GM12878 (cell line): ENCODE measurements at regions of chr6 and their contacts with region 1.

Region 1: GRCh38 chr6:89432875-89433251 is at the start of gene ANKRD6:
- DNase-seq: peak; percentile 17
- ATAC-seq: peak; percentile 97
- H3K4me3 ChIP-seq: peak within 1 kb of the TSS; percentile 79
- H3K27ac ChIP-seq: no peak within 1 kb of the TSS
- H3K4me1 ChIP-seq: peaks cover 8% of the 10 kb centered on the region
- H3K27me3 ChIP-seq: peaks cover 0 to 4% of the 10 kb centered on the region in 2 experiments; a peak in 3 of 4 replicates
- CTCF ChIP-seq: peak; percentile 81 to 92 (median 84); a peak in 5 of 6 replicates
- EP300 ChIP-seq: no peak
- POLR2A ChIP-seq: no peak
- RAD21 ChIP-seq: peak; percentile 93
- polyA plus RNA-seq, gene ANKRD6: 0.03 to 0.09 TPM

Region 2: DNA sequence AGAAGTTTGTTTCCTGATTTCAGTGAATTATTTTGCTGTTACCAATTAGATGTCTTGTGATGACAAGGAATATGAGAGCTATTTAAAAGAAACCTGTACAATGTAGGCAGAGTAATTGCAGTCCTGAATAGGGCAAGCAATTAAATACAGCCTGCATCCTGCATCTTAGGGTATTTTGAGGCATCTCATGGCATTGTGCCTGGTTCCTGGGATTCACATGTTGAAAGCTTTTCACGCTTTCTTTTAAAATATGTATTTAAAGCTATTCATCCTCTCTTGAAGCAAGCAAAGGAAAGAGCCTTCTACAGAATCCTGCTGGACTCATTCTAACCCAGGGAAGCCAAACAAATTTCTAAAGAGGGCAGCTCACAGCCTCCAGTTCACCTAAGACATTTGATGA is 16.1 kb before region 1 on chr6:
- CTCF ChIA-PET with region 1: interaction called, 14 read pairs
- POLR2A ChIA-PET with region 1: no interaction called
- RAD21 ChIA-PET with region 1: no interaction called
- SMC1A ChIA-PET with region 1: interaction called, 5 read pairs
- in situ Hi-C with region 1: no loop called
- intact Hi-C with region 1: no loop called
- DNase-seq: no peak
- ATAC-seq: no peak
- H3K4me3 ChIP-seq: no peak overlapping the region
- H3K27ac ChIP-seq: no peak overlapping the region
- H3K4me1 ChIP-seq: no peaks in the 10 kb centered on the region
- H3K27me3 ChIP-seq: no peaks in the 10 kb centered on the region
- CTCF ChIP-seq: no peak
- EP300 ChIP-seq: no peak
- POLR2A ChIP-seq: no peak
- RAD21 ChIP-seq: no peak

Region 3: DNA sequence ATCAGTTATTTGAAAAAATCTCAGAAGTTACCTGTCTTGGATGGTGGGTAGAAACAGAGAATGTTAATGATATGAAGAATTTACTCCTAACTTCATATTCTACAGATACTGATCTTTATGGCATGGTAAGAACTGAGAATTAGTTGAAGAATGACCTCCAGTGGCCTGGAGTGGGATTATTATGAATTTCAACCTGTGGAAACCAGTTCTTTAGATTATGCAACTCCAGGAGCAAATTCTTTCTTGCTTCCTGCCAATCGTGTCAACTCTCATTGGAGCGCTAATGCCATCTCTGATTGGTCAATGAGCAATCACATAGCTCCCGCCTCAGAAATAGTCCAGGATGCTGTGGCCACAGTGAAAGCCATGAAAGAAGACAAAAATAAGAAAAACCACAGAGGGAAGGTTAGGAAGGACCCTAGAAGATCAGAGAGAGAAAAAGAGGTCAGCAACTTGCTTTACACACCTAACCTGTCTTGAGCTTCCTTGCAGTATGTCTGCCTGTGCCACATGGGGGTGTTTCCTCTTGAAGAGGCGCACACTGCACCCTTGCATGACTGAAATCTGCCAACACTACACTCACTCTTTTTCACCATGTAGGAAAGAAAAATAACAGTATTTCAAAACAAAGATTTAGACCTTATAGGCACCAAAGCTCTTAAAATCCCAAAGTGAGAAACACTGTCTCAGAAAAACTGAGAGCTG is 165.3 kb after region 1 on chr6:
- CTCF ChIA-PET with region 1: interaction called, 4 read pairs
- POLR2A ChIA-PET with region 1: no interaction called
- RAD21 ChIA-PET with region 1: interaction called, 3 read pairs
- SMC1A ChIA-PET with region 1: interaction called, 5 read pairs
- in situ Hi-C with region 1: no loop called
- intact Hi-C with region 1: loop called (anchors 5 kb)
- DNase-seq: no peak
- ATAC-seq: peak; percentile 20; the same call in 1 of the 3 replicates
- H3K4me3 ChIP-seq: no peak overlapping the region
- H3K27ac ChIP-seq: no peak overlapping the region
- H3K4me1 ChIP-seq: peaks cover 17% of the 10 kb centered on the region
- H3K27me3 ChIP-seq: no peaks in the 10 kb centered on the region
- CTCF ChIP-seq: peak; percentile 12 to 34 (median 14); a peak in 3 of 6 replicates
- EP300 ChIP-seq: no peak
- POLR2A ChIP-seq: no peak
- RAD21 ChIP-seq: peak; percentile 44

Region 4: GRCh38 chr6:89610149-89610642 is 177.3 kb after region 1 on chr6:
- CTCF ChIA-PET with region 1: interaction called, 64 read pairs
- POLR2A ChIA-PET with region 1: interaction called, 4 read pairs
- RAD21 ChIA-PET with region 1: interaction called, 9 read pairs
- SMC1A ChIA-PET with region 1: interaction called, 14 read pairs
- in situ Hi-C with region 1: loop called (anchors 5 kb)
- intact Hi-C with region 1: loop called (anchors 1 kb)
- DNase-seq: peak; percentile 30
- ATAC-seq: peak; percentile 98
- H3K4me3 ChIP-seq: no peak overlapping the region
- H3K27ac ChIP-seq: no peak overlapping the region
- H3K4me1 ChIP-seq: no peaks in the 10 kb centered on the region
- H3K27me3 ChIP-seq: no peaks in the 10 kb centered on the region
- CTCF ChIP-seq: peak; percentile 81 to 93 (median 91)
- EP300 ChIP-seq: no peak
- POLR2A ChIP-seq: no peak
- RAD21 ChIP-seq: peak; percentile 73